PC-3 (cell line): ENCODE measurements at regions of chr17 and their contacts with region 1.

Region 1: DNA sequence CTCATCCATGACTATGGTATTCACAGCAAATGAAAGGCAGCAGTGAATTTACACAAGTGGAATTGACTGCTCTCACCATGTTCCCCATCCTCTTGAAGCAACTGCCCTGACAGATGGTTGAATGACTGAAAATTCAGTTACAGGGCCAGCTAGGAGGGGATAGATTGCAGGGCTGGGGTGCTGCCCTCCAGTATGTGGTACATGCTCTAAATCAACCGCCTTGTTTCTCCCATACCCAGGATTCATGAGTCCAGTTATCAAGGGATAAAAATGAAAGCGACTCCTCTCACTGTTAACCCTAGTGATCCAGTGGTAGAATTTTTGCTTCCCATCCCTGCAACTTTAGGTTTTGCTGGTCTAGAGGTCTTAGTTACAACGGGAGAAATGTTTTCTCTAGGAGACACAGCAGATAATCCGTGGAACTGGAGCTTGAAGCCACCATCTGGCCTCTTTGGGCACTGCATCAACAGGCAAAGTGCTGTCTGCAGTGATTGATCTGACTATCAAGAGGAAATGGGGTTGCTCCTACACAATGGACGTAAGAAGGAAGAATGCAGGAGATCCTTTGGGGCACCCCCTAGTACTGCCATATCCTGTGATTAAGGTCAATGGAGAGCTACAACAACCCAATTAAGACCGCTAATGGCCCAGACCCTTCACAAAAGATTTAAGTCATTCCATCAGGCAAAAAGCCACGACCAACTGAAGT is 32.0 kb downstream of the SCPEP1 start:
- DNase-seq: peak; percentile 78
- ATAC-seq: peak; percentile 96
- H3K4me3 ChIP-seq: peak overlapping the region; percentile 36
- H3K27ac ChIP-seq: no peak overlapping the region
- H3K4me1 ChIP-seq: peaks cover 3% of the 10 kb centered on the region; the same call in 1 of the 2 replicates
- H3K27me3 ChIP-seq: no peaks in the 10 kb centered on the region
- CTCF ChIP-seq: peak; percentile 88

Region 2: DNA sequence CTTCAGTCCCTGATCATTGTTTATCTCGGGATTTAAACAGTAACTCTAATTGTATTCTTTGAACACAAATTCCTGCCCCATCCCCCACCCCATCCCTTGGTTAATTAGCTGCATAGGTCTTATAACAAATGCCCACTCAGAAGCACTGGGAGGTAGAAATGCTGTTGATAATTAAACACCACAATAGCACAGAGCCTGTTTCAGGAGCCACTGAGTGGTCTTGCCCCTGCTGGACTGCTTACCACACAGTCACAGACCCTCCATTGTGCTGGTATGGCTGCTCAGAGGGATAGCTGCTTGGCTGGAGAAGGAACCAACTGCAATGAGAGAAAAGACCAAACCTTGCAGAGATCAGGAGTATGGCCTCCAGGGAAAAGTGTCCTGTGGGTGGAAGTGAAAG is 642.5 kb before region 1 on chr17:
- CTCF ChIA-PET with region 1: no interaction called
- POLR2A ChIA-PET with region 1: no interaction called
- intact Hi-C with region 1: no loop called
- DNase-seq: no peak
- ATAC-seq: no peak
- H3K4me3 ChIP-seq: no peak overlapping the region
- H3K27ac ChIP-seq: no peak overlapping the region
- H3K4me1 ChIP-seq: no peaks in the 10 kb centered on the region
- H3K27me3 ChIP-seq: peaks cover 27% of the 10 kb centered on the region
- CTCF ChIP-seq: no peak

Region 3: GRCh38 chr17:57043276-57043675 is 33.4 kb after region 1 on chr17:
- CTCF ChIA-PET with region 1: no interaction called
- POLR2A ChIA-PET with region 1: no interaction called
- intact Hi-C with region 1: loop called (anchors 2 kb)
- DNase-seq: no peak
- ATAC-seq: no peak
- H3K4me3 ChIP-seq: no peak overlapping the region
- H3K27ac ChIP-seq: no peak overlapping the region
- H3K4me1 ChIP-seq: no peaks in the 10 kb centered on the region
- H3K27me3 ChIP-seq: no peaks in the 10 kb centered on the region
- CTCF ChIP-seq: no peak

Region 4: DNA sequence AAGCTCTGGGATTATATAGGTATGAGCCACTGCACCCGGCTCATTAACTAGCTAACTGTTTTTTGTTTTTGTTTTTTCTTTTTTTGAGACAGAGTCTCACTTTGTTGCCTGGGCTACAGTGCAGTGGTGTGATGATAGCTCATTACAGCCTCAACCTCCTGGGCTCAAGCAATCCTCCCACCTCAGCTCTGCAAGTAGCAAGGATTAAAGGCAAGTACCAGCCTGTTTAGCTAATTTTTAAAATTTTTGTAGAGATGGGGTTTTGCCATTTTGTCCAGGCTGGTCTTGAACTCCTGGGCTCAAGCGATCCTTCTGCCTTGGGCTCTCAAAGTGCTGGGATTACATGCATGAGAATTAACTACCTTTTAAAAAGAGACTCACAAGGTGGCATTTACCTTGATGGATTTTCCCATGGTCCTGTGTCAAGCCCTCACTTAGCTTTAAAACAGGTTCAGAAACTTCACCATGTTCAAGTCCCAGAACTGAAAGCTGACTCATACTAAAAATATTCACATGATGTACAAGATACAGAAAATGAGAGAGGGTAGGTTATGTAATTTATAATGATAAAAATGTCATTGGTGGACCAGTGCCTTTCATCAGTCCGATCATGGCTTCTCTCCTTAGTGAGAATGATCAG is 70.7 kb after region 1 on chr17:
- CTCF ChIA-PET with region 1: no interaction called
- POLR2A ChIA-PET with region 1: no interaction called
- intact Hi-C with region 1: no loop called
- DNase-seq: peak; percentile 53
- ATAC-seq: no peak
- H3K4me3 ChIP-seq: no peak overlapping the region
- H3K27ac ChIP-seq: no peak overlapping the region
- H3K4me1 ChIP-seq: 0 out of 2 replicates have a peak, but pooled peaks cover 9% of the 10 kb centered on the region
- H3K27me3 ChIP-seq: no peaks in the 10 kb centered on the region
- CTCF ChIP-seq: no peak

Region 5: GRCh38 chr17:57106107-57106835 is 96.4 kb after region 1 on chr17:
- CTCF ChIA-PET with region 1: no interaction called
- POLR2A ChIA-PET with region 1: no interaction called
- intact Hi-C with region 1: loop called (anchors 5 kb)
- DNase-seq: peak; percentile 55
- ATAC-seq: peak; percentile 39
- H3K4me3 ChIP-seq: no peak overlapping the region
- H3K27ac ChIP-seq: peak overlapping the region; percentile 97
- H3K4me1 ChIP-seq: peaks cover 39% of the 10 kb centered on the region
- H3K27me3 ChIP-seq: no peaks in the 10 kb centered on the region
- CTCF ChIP-seq: peak; percentile 73